ENCODE measurements at regions of chr5 and their contacts with region 1.

Region 1: GRCh38 chr5:173887610-173888472 is at the start of gene CPEB4:
- DNase-seq: peak; percentile 100
- ATAC-seq: peak; percentile 93
- H3K4me3 ChIP-seq: peak within 1 kb of the TSS; percentile 90
- H3K27ac ChIP-seq: peak within 1 kb of the TSS; percentile 73
- H3K4me1 ChIP-seq: peaks cover 35% of the 10 kb centered on the region
- H3K27me3 ChIP-seq: no peaks in the 10 kb centered on the region
- CTCF ChIP-seq: no peak
- total RNA-seq, gene CPEB4: 26.2 and 37.0 TPM in 2 replicates

Region 2: DNA sequence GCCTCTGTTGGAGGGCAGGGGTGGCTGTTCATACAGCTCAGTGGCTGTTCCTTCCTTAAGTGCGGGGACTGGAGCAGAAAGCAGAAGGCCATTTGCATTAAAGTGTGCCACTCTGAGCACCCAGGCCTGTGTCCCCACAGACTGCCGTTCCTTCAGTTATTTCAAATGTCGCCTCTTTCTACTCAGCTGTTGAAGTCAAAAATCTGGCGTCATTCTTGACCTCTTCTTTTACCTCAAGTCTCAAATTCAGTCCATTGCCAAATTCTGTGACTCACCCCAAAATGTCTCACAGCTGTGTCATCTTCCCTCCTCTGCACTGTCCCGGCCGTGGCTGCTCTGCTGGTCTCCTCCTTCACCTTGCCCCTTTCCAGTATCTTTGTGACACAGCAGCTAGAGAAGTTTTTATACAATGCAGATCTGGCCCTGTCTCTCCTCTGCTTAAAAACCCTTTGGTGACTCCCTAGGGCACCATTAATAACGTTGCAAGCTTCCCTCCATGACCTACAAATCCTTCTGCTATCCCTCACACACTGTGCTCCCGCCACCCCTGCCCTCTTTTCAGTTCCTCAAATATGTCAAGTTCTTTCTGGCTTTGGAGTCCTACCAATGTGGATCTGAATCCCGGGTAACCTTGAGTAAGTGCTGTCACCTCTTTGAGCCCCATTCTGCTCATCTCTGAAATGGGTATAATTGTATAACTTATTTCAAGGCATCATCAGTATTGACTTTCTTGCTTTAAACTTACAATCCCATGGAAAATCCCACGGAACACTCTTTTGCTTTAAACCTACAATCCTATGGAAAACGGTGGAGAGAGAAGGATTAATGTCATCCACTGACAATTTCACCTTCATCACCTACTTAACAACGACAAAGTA is 173.1 kb before region 1 on chr5:
- CTCF ChIA-PET with region 1: no interaction called
- POLR2A ChIA-PET with region 1: no interaction called
- intact Hi-C with region 1: loop called (anchors 5 kb)
- DNase-seq: peak; percentile 97
- ATAC-seq: peak; percentile 93
- H3K4me3 ChIP-seq: no peak overlapping the region
- H3K27ac ChIP-seq: peak overlapping the region; percentile 58
- H3K4me1 ChIP-seq: peaks cover 31% of the 10 kb centered on the region
- H3K27me3 ChIP-seq: no peaks in the 10 kb centered on the region
- CTCF ChIP-seq: no peak

Region 3: GRCh38 chr5:173829817-173830216 is 58.0 kb before region 1 on chr5:
- CTCF ChIA-PET with region 1: interaction called, 4 read pairs
- POLR2A ChIA-PET with region 1: no interaction called
- intact Hi-C with region 1: loop called (anchors 5 kb)
- DNase-seq: peak; percentile 80
- ATAC-seq: peak; percentile 98
- H3K4me3 ChIP-seq: no peak overlapping the region
- H3K27ac ChIP-seq: no peak overlapping the region
- H3K4me1 ChIP-seq: peaks cover 18% of the 10 kb centered on the region
- H3K27me3 ChIP-seq: no peaks in the 10 kb centered on the region
- CTCF ChIP-seq: no peak

Region 4: GRCh38 chr5:173917788-173918786 is 30.2 kb after region 1 on chr5:
- CTCF ChIA-PET with region 1: no interaction called
- POLR2A ChIA-PET with region 1: interaction called, 4 read pairs
- intact Hi-C with region 1: loop called (anchors 1 kb)
- DNase-seq: peak; percentile 87
- ATAC-seq: peak; percentile 75
- H3K4me3 ChIP-seq: peak overlapping the region; percentile 74
- H3K27ac ChIP-seq: peak overlapping the region; percentile 91
- H3K4me1 ChIP-seq: peaks cover 34% of the 10 kb centered on the region
- H3K27me3 ChIP-seq: no peaks in the 10 kb centered on the region
- CTCF ChIP-seq: peak; percentile 32; the same call in 1 of the 2 replicates

Region 5: DNA sequence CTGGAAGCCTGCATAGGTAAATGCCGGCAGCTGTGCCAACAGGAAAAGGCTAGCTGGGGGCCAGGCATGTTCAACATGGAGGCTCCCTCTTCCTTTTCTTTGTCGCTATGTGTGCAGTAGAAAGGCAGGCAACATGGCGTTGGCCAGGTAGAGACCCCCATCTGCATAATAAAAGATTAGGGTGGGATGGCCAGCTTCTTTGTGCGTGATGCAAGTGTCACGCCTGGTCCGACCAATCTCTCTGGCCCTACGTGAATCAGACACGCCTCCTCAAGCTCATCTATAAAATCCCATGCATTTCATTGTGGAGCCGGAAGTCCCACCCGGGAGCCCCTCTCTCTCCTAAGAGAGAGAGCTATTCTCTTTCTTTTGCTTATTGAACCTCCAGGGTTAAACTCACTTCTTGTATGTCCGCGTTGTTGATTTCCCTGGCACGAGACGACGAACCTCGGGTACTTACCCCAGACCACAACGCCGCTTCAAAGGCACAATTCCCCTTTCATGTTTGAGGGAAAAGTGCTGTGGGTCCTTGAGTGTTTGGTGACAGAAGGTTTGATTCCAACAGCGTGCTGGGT is 76.1 kb after region 1 on chr5:
- CTCF ChIA-PET with region 1: no interaction called
- POLR2A ChIA-PET with region 1: interaction called, 14 read pairs
- intact Hi-C with region 1: loop called (anchors 1 kb)
- DNase-seq: peak; percentile 44
- ATAC-seq: peak; percentile 45
- H3K4me3 ChIP-seq: peak overlapping the region; percentile 66
- H3K27ac ChIP-seq: peak overlapping the region; percentile 89
- H3K4me1 ChIP-seq: peaks cover 24% of the 10 kb centered on the region
- H3K27me3 ChIP-seq: no peaks in the 10 kb centered on the region
- CTCF ChIP-seq: no peak

Region 6: DNA sequence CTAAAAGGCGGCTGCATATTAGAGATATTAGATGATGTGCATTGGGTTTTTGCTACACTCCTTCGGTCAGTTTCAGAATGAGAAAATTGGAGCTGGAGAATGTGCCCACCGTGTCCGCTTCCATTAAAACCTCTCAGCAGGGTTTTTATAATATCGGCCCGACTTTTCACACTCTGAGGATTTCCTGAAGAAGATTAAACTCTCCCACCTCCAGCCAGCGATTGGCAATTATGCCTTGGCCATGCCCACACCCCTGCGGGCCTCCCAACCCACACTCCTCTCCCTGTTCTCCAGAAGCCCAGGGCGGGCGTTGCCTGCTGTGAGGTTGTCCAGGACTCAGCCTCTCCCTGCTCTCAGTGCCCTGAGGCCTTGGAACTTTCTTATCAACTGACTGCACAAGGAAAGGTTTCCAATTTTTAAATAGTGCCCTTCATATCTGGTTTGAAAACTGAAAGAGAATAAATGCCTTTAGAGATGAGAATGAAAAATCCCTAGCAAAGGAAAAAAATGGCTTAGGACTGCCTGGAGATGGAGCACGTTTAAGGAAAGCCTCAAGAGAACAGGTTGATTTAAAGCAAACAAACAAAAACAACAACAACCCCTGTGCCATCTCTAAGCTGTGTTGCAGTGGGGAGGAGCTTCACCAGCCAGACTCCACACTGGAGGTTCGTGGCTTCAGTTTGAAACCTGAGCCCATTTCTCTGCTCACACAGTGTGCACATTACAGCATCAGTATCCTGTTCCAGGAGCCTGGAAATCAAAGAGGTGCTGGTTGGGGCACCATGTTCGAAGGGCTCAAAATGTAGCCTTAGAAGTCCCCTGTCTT is 450.6 kb after region 1 on chr5:
- CTCF ChIA-PET with region 1: no interaction called
- POLR2A ChIA-PET with region 1: no interaction called
- intact Hi-C with region 1: no loop called
- DNase-seq: peak; percentile 27
- ATAC-seq: no peak
- H3K4me3 ChIP-seq: no peak overlapping the region
- H3K27ac ChIP-seq: no peak overlapping the region
- H3K4me1 ChIP-seq: peaks cover 28% of the 10 kb centered on the region
- H3K27me3 ChIP-seq: peaks cover 7% of the 10 kb centered on the region; the same call in 1 of the 2 replicates
- CTCF ChIP-seq: no peak